ENCODE measurements at regions of chr12 and their contacts with region 1.

Region 1: GRCh38 chr12:31257784-31258183 is 68.2 kb downstream of the SINHCAF start:
- DNase-seq: no peak
- H3K4me3 Mint-ChIP-seq: no peak overlapping the region
- H3K27ac Mint-ChIP-seq: no peak overlapping the region
- H3K4me1 Mint-ChIP-seq: no peaks in the 10 kb centered on the region
- H3K27me3 Mint-ChIP-seq: no peaks in the 10 kb centered on the region
- CTCF ChIP-seq: no peak

Region 2: DNA sequence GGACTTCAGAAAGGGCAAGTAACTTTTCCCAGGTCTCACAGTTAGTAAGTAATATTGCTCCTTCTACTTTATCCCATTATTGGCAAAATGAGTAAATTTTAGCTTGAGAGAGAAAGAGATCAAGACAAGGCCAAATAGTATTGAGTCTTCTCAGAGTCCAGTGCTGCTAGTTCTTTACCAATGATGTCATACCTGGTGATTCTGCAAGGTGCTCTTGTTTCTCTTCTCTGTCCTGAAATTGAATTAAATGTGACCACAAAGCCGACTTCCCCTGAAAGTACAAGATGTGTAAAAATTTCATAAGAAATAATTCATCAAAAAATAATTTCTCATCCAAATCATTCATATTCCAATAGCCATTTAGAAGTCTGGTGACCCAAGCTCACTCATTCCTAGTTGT is 165.6 kb after region 1 on chr12:
- CTCF ChIA-PET with region 1: interaction called, 10 read pairs
- intact Hi-C with region 1: no loop called
- DNase-seq: no peak
- H3K4me3 Mint-ChIP-seq: no peak overlapping the region
- H3K27ac Mint-ChIP-seq: no peak overlapping the region
- H3K4me1 Mint-ChIP-seq: no peaks in the 10 kb centered on the region
- H3K27me3 Mint-ChIP-seq: no peaks in the 10 kb centered on the region
- CTCF ChIP-seq: no peak

Measured in Calu3 (cell line).